ENCODE measurements at regions of chr6 and their contacts with region 1.

Region 1: DNA sequence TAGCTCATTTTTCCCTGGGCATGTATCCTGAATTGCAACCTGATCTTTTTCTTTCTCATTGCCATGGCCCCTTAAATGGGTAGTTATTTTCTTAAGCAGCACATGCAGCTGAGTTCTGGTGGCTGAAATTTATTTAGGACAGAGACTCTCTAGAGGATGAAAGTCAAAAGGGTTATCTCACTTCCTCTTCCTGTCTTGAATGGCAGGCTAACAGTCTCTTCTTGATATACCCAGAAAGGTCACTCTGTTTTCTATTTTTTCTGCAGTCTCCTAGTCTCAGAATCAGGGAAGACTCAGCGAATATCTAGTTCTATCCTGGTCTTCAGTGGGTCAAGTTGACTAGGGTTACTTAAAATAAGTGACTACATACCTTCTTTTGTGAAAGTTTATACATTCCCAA is 243.3 kb downstream of the EPHA7 start:
- DNase-seq: peak; percentile 86
- H3K4me3 ChIP-seq: peak overlapping the region; percentile 20
- H3K27ac ChIP-seq: peak overlapping the region; percentile 64
- H3K4me1 ChIP-seq: peaks cover 41% of the 10 kb centered on the region
- CTCF ChIP-seq: no peak

Region 2: DNA sequence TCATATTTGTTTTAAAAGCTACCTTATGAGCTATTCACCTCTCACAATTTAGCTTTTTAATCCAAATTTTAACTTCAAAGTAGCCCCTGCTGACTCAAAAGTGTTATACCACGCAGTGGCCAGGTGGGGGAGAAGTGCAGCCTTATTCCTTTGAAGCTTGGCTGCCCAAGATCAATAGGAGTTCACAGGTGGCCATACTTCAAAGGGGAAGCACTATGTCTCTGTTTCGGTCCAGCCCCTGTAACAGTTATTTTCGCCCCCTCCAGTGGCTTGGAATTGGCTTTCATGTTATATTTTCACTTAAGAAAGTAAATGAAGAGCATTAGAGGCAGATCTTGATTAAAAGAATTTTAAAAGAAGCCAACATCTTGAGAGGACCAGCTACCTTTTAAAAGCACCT is 365.2 kb before region 1 on chr6:
- CTCF ChIA-PET with region 1: no interaction called
- POLR2A ChIA-PET with region 1: no interaction called
- intact Hi-C with region 1: loop called (anchors 5 kb)
- DNase-seq: peak; percentile 93
- H3K4me3 ChIP-seq: peak overlapping the region; percentile 51
- H3K27ac ChIP-seq: peak overlapping the region; percentile 77
- H3K4me1 ChIP-seq: peaks cover 39% of the 10 kb centered on the region
- CTCF ChIP-seq: peak; percentile 89

Measured in OCI-LY7 (cell line).